ENCODE measurements at regions of chr12 and their contacts with region 1.

Region 1: DNA sequence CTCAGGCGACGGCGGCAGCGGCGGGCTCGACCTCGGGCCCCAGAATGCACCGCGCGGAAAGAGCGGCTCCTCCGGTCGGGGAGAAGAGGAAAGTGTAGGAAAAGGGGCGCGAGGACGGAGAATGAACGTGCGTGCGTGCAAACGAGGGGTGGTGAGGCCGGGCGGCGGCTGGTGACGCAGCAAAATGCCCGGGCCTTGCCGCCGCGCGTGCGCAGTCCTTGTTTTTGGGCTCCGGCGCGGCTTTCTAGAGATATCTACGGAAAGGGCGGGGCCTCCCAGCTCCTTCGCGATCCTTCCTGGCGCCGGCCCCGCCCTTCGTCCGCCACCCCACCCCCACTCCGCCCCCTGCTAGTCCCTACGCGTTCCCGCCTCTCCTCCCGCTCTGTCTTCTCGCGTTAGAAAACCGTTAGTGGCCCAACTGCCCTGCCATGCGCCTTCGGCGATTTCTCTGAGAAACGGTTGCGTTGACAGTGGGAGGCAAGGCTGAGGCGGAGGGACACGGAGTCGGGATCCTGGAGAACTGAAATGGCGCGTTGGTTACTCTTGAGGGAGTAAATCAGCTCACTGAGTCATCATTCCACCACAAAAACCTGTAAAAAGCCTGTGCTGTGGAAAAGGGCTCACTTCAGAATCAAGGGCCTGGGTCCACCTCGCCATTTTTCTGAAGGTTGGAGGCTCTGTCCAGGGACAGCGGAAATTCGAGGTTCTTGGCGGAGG is at the start of gene PTGES3:
- DNase-seq: peak; percentile 92 to 97
- H3K4me3 ChIP-seq: peak within 1 kb of the TSS; percentile 97
- H3K27ac ChIP-seq: peak within 1 kb of the TSS; percentile 94
- H3K4me1 ChIP-seq: peaks cover 15% of the 10 kb centered on the region
- H3K27me3 ChIP-seq: no peaks in the 10 kb centered on the region
- CTCF ChIP-seq: no peak
- total RNA-seq, gene PTGES3: 227 and 322 TPM in 2 replicates

Region 2: DNA sequence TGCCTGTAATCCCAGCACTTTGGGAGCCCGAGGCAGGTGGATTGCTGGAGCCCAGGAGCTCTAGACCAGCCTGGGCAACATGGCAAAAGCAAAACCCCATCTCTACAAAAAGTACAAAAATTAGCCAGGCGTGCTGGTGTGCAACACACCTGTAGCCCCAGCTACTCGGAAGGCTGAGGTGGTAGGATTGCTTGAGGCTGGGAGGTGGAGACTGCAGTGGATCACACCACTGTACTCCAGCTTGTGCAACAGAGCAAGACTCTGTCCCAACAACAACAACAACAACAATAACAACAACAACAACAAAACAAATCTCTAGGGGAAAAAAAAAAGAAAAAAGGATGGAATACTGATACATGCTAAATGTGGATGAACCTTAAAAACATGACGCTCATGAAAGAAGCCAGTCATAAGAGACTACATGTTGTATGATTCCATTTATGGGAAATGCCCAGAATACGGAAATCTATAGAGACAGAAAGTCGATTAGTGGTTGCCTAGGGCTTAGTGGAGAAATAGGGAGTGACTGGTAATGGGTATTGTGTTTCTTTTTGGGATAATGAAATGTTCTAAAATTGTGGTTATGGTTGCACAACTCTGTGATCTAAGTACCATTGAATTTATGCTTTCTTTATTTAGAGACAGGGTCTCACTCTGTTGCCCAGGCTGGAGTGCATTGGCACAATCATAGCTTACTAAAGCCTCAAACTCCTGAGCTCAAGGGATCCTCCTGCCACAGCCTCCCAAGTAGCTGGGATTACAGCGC is 158.8 kb before region 1 on chr12:
- CTCF ChIA-PET with region 1: no interaction called
- POLR2A ChIA-PET with region 1: no interaction called
- intact Hi-C with region 1: no loop called
- DNase-seq: no peak
- H3K4me3 ChIP-seq: no peak overlapping the region
- H3K27ac ChIP-seq: no peak overlapping the region
- H3K4me1 ChIP-seq: peaks cover 44% of the 10 kb centered on the region
- H3K27me3 ChIP-seq: no peaks in the 10 kb centered on the region
- CTCF ChIP-seq: no peak

Region 3: DNA sequence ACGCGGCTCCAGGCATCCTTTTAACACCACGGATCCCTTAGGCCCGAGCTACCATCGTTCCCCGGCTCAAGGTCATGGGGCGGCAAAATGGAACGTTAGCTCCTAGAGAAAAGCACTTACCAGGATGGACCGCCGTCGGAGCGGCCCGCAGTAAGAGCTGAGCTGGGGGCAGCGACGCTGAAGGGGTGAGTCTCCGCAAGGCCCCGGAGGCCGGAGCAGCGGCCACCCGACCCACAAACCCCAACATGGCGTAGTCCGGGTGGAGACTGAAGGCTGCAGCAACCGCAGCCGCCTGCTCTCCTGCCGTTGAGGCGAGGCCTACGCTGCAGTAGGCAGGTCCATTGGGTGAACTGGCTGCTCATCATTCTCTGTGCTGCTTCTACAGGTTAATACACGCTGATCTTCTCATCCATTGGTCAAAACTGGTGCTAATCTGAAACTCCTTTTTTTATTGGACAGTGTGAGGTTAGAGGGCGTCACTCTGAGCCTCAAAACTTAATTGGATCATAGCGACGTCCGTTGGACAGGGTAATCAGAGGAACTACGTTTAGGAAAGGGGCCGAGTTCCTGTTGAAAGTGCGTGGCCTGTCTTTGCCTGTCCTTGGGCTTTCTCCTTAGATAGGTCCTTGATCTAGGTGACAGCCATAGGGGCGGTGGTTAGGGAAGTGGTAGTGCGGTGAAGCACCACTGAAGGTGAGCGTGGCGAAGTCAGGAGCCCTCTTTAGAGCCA is 42.4 kb before region 1 on chr12 and contains the start of gene ATP5F1B:
- CTCF ChIA-PET with region 1: no interaction called
- POLR2A ChIA-PET with region 1: interaction called, 3 read pairs
- intact Hi-C with region 1: loop called (anchors 2 kb)
- DNase-seq: peak; percentile 94 to 99
- H3K4me3 ChIP-seq: peak within 1 kb of the TSS; percentile 94
- H3K27ac ChIP-seq: peak within 1 kb of the TSS; percentile 61
- H3K4me1 ChIP-seq: peaks cover 18% of the 10 kb centered on the region
- H3K27me3 ChIP-seq: no peaks in the 10 kb centered on the region
- CTCF ChIP-seq: no peak
- total RNA-seq, gene ATP5F1B: 506 and 587 TPM in 2 replicates

Region 4: GRCh38 chr12:56724972-56725722 is 36.9 kb after region 1 on chr12 and contains the start of gene NACA:
- CTCF ChIA-PET with region 1: no interaction called
- POLR2A ChIA-PET with region 1: interaction called, 10 read pairs
- intact Hi-C with region 1: loop called (anchors 1 kb)
- DNase-seq: peak; percentile 94 to 95
- H3K4me3 ChIP-seq: peak within 1 kb of the TSS; percentile 99
- H3K27ac ChIP-seq: peak within 1 kb of the TSS; percentile 94
- H3K4me1 ChIP-seq: peaks cover 39% of the 10 kb centered on the region
- H3K27me3 ChIP-seq: no peaks in the 10 kb centered on the region
- CTCF ChIP-seq: no peak
- total RNA-seq, gene NACA: 812 and 1,035 TPM in 2 replicates

Region 5: DNA sequence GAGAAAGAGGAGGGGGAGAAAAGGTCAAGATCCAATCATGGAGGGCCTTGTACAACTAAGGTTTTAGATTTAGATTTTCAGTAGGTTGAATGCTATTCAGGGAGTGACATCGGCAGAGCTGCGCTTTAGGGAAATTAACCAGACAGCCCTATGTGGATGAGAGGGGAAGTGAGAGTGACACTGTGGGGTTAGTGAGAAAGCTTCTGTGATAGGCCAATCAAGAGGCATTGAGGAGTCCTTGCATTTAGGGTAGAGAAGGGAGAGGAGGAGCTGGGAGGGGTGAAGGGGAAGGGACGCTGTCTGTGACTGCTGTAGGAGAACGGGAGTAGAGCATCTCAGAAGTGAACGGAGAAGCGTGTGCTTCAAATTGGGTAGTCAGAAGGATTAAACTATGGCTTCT is 78.2 kb after region 1 on chr12:
- CTCF ChIA-PET with region 1: no interaction called
- POLR2A ChIA-PET with region 1: no interaction called
- intact Hi-C with region 1: no loop called
- DNase-seq: no peak
- H3K4me3 ChIP-seq: no peak overlapping the region
- H3K27ac ChIP-seq: no peak overlapping the region
- H3K4me1 ChIP-seq: no peaks in the 10 kb centered on the region
- H3K27me3 ChIP-seq: no peaks in the 10 kb centered on the region
- CTCF ChIP-seq: no peak

Region 6: GRCh38 chr12:56839915-56840325 is 151.6 kb after region 1 on chr12:
- CTCF ChIA-PET with region 1: no interaction called
- POLR2A ChIA-PET with region 1: no interaction called
- intact Hi-C with region 1: no loop called
- DNase-seq: peak; percentile 37 to 56
- H3K4me3 ChIP-seq: no peak overlapping the region
- H3K27ac ChIP-seq: no peak overlapping the region
- H3K4me1 ChIP-seq: no peaks in the 10 kb centered on the region
- H3K27me3 ChIP-seq: no peaks in the 10 kb centered on the region
- CTCF ChIP-seq: peak; percentile 70

Region 7: GRCh38 chr12:56957229-56957939 is 269.1 kb after region 1 on chr12 and contains the start of gene RDH16:
- CTCF ChIA-PET with region 1: no interaction called
- POLR2A ChIA-PET with region 1: no interaction called
- intact Hi-C with region 1: no loop called
- DNase-seq: peak; percentile 64 to 66
- H3K4me3 ChIP-seq: no peak within 1 kb of the TSS
- H3K27ac ChIP-seq: no peak within 1 kb of the TSS
- H3K4me1 ChIP-seq: peaks cover 19% of the 10 kb centered on the region
- H3K27me3 ChIP-seq: no peaks in the 10 kb centered on the region
- CTCF ChIP-seq: no peak
- total RNA-seq, gene RDH16: 0.79 and 0.88 TPM in 2 replicates

Region 8: GRCh38 chr12:56987551-56988053 is 299.3 kb after region 1 on chr12:
- CTCF ChIA-PET with region 1: no interaction called
- POLR2A ChIA-PET with region 1: interaction called, 21 read pairs
- intact Hi-C with region 1: no loop called
- DNase-seq: peak in 1 of 2 experiments; percentile 66
- H3K4me3 ChIP-seq: no peak overlapping the region
- H3K27ac ChIP-seq: no peak overlapping the region
- H3K4me1 ChIP-seq: peaks cover 12% of the 10 kb centered on the region
- H3K27me3 ChIP-seq: no peaks in the 10 kb centered on the region
- CTCF ChIP-seq: peak; percentile 95

Region 9: GRCh38 chr12:57182921-57183790 is 494.9 kb after region 1 on chr12:
- CTCF ChIA-PET with region 1: no interaction called
- POLR2A ChIA-PET with region 1: interaction called, 27 read pairs
- intact Hi-C with region 1: no loop called
- DNase-seq: peak; percentile 56 to 82
- H3K4me3 ChIP-seq: no peak overlapping the region
- H3K27ac ChIP-seq: no peak overlapping the region
- H3K4me1 ChIP-seq: no peaks in the 10 kb centered on the region
- H3K27me3 ChIP-seq: no peaks in the 10 kb centered on the region
- CTCF ChIP-seq: peak; percentile 92

Measured in PC-9 (cell line).